Aorta (tissue), 5 donors: ENCODE measurements at regions of chr6 and their contacts with region 1.

Region 1: GRCh38 chr6:44002593-44003344 is 124.5 kb downstream of the MRPL14 start:
- DNase-seq: peak; percentile 72 to 86
- ATAC-seq: peak; percentile 41
- H3K4me3 ChIP-seq: no peak overlapping the region
- H3K27ac ChIP-seq: no peak overlapping the region
- H3K4me1 ChIP-seq: no peaks in the 10 kb centered on the region
- H3K27me3 ChIP-seq: no peaks in the 10 kb centered on the region

Region 2: GRCh38 chr6:43774776-43775534 is 227.8 kb before region 1 on chr6:
- intact Hi-C with region 1: loop called (anchors 2 to 5 kb)
- DNase-seq: peak; percentile 75 to 87
- ATAC-seq: peak; percentile 52
- H3K4me3 ChIP-seq: no peak overlapping the region
- H3K27ac ChIP-seq: no peak overlapping the region
- H3K4me1 ChIP-seq: no peaks in the 10 kb centered on the region
- H3K27me3 ChIP-seq: peaks cover 0 to 1% of the 10 kb centered on the region in 2 donors

Region 3: GRCh38 chr6:44058617-44059358 is 56.0 kb after region 1 on chr6:
- intact Hi-C with region 1: loop called in 1 of 2 experiments (anchors 5 kb)
- DNase-seq: peak; percentile 92 to 95
- ATAC-seq: peak; percentile 87
- H3K4me3 ChIP-seq: no peak overlapping the region
- H3K27ac ChIP-seq: peak overlapping the region in 1 of 2 donors; percentile 69
- H3K4me1 ChIP-seq: peaks cover 0 to 4% of the 10 kb centered on the region in 2 donors
- H3K27me3 ChIP-seq: no peaks in the 10 kb centered on the region